ENCODE measurements at regions of chr2 and their contacts with region 1.

Region 1: GRCh38 chr2:216519154-216519762 is 20.6 kb downstream of the RPL37A start:
- DNase-seq: peak; percentile 76
- H3K4me3 Mint-ChIP-seq: no peak overlapping the region
- H3K27ac Mint-ChIP-seq: no peak overlapping the region
- H3K4me1 Mint-ChIP-seq: no peaks in the 10 kb centered on the region
- H3K27me3 Mint-ChIP-seq: no peaks in the 10 kb centered on the region

Region 2: DNA sequence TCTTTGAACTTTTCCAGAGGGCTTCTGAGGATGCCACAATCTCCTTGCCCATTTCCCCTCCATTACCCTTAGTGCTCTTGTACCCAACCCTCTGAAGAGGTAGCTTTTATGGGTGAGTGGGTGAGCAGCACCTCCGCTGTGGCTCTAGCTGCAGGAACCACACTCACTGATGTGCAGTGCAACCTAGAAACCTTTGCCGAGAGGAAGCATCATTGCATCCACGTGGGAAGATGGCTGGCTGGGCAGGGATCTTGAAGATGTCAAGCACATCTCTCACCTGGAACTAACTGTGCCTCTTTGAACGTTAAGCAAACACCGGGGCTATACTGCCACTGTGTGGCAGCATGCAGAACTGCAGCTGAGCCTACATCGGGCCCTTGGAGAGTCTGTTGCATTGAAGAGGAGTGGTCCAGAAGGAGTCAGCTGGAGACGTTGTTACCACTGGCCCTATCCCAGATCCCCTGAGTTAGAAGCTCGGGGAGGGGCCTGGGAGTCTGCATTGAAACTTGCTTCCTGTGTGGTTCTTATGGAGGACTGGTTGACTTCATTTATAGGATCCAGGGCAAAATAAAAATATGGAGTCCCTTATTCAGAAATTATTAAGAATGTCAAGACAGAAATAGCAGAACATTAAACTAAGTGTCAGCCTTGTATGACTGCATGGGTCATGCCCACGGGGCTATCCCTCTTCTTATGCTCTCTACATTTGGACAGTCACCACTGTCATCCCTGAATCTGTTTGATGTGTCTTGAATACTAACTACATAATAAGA is 147.4 kb after region 1 on chr2:
- CTCF ChIA-PET with region 1: interaction called, 60 read pairs
- POLR2A ChIA-PET with region 1: no interaction called
- DNase-seq: peak; percentile 71
- H3K4me3 Mint-ChIP-seq: no peak overlapping the region
- H3K27ac Mint-ChIP-seq: no peak overlapping the region
- H3K4me1 Mint-ChIP-seq: no peaks in the 10 kb centered on the region
- H3K27me3 Mint-ChIP-seq: no peaks in the 10 kb centered on the region

Measured in activated CD4-positive, alpha-beta T cell treated with anti-CD3 and anti-CD28 coated beads, Interleukin-2, amount 10 ng/mL, durations not matched to agents 7 days and 5 days (primary cell).